Esophagus squamous epithelium (tissue), 5 donors: ENCODE measurements at regions of chr7 and their contacts with region 1.

Region 1: GRCh38 chr7:36670585-36671431 is 53.5 kb downstream of the AOAH start:
- DNase-seq: peak; percentile 3
- H3K4me3 ChIP-seq: no peak overlapping the region
- H3K27ac ChIP-seq: no peak overlapping the region
- H3K4me1 ChIP-seq: peaks cover 0 to 3% (median 0%) of the 10 kb centered on the region in 3 donors
- H3K27me3 ChIP-seq: peaks cover 0 to 3% (median 0%) of the 10 kb centered on the region in 4 donors
- CTCF ChIP-seq: peak; percentile 57 to 93 (median 83)
- POLR2A ChIP-seq: no peak

Region 2: GRCh38 chr7:36487756-36488336 is 183.0 kb before region 1 on chr7:
- intact Hi-C with region 1: loop called (anchors 10 kb)
- DNase-seq: no peak
- H3K4me3 ChIP-seq: no peak overlapping the region
- H3K27ac ChIP-seq: no peak overlapping the region
- H3K4me1 ChIP-seq: peaks cover 0 to 18% (median 0%) of the 10 kb centered on the region in 3 donors
- H3K27me3 ChIP-seq: peaks cover 0 to under 1% (median 0%) of the 10 kb centered on the region in 4 donors
- CTCF ChIP-seq: peak; percentile 24 to 87 (median 68)
- POLR2A ChIP-seq: no peak

Region 3: DNA sequence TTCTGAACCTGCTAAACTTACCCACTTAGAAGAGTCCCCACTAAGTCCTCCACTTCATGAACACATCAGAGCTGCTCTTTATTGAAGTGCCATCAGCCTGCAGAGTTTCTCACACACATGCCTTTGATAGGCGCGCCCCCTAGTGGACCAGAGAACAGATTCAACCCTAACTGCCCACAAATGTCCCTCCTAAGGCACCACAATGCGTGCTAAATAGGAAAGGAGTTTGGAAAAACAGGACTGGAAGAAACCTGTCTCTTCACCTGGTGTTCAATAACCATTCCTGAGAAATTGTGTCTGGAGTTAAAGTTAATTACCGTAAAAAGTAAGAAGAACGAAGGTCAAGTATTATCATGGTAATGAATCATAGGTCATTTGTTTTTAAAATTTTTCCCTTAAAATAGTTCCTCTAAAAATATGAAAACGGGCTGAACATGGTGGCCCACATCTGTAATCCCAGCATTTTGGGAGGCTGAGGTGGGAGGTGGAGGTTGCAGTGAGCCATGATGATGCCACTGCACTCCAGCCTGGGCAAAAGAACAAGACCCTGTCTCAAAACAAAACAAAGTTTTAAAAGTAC is 528.2 kb after region 1 on chr7:
- intact Hi-C with region 1: loop called (anchors 10 kb)
- DNase-seq: no peak
- H3K4me3 ChIP-seq: no peak overlapping the region
- H3K27ac ChIP-seq: no peak overlapping the region
- H3K4me1 ChIP-seq: peaks cover 0 to 41% (median 25%) of the 10 kb centered on the region in 3 donors
- H3K27me3 ChIP-seq: no peaks in the 10 kb centered on the region
- CTCF ChIP-seq: peak; percentile 67 to 87 (median 82)
- POLR2A ChIP-seq: no peak